Esophagus muscularis mucosa (tissue), 4 donors: ENCODE measurements at regions of chrX and their contacts with region 1.

Region 1: DNA sequence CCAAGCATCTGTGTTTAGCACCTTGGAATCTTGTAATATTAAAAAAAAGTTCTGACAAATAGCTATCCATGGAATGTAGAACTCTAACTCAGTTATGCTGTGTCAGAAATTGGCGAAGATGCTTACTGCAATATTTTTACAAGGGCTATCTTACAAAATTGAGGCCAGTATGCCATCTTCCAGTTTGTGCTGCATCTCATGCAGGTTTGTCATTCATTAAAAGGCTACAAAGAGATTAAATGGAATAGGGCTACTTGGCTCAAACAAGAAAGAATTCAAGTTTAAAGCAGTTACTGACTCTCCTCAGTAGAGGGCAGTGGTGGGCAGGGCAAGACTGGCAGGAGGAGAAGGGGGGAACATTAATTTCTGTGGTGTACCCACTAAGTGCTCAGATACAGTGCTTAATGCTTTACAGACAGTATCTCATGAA is 66.5 kb downstream of the SHROOM4 start:
- DNase-seq: no peak
- H3K4me3 ChIP-seq: no peak overlapping the region
- H3K27ac ChIP-seq: no peak overlapping the region
- H3K4me1 ChIP-seq: peaks cover 0 to 8% (median 0%) of the 10 kb centered on the region in 4 donors
- H3K27me3 ChIP-seq: peaks cover 0 to 7% (median 0%) of the 10 kb centered on the region in 4 donors
- CTCF ChIP-seq: peak; percentile 52 to 61 (median 53)
- EP300 ChIP-seq: no peak
- POLR2A ChIP-seq: no peak

Region 2: GRCh38 chrX:50697691-50698090 is 49.8 kb before region 1 on chrX:
- intact Hi-C with region 1: no loop called
- DNase-seq: no peak
- H3K4me3 ChIP-seq: no peak overlapping the region
- H3K27ac ChIP-seq: peak overlapping the region in 3 of 4 donors; percentile 18 to 52 (median 31)
- H3K4me1 ChIP-seq: peaks cover 0 to 13% (median 9%) of the 10 kb centered on the region in 4 donors
- H3K27me3 ChIP-seq: no peaks in the 10 kb centered on the region
- CTCF ChIP-seq: no peak
- EP300 ChIP-seq: no peak
- POLR2A ChIP-seq: no peak

Region 3: GRCh38 chrX:50707955-50708699 is 39.4 kb before region 1 on chrX:
- intact Hi-C with region 1: no loop called
- DNase-seq: no peak
- H3K4me3 ChIP-seq: no peak overlapping the region
- H3K27ac ChIP-seq: no peak overlapping the region
- H3K4me1 ChIP-seq: peaks cover 7 to 31% (median 20%) of the 10 kb centered on the region in 4 donors
- H3K27me3 ChIP-seq: no peaks in the 10 kb centered on the region
- CTCF ChIP-seq: no peak
- EP300 ChIP-seq: no peak
- POLR2A ChIP-seq: no peak

Region 4: GRCh38 chrX:50813827-50814742 is 66.6 kb after region 1 on chrX and contains the start of gene SHROOM4:
- intact Hi-C with region 1: loop called (anchors 10 kb)
- DNase-seq: no peak
- H3K4me3 ChIP-seq: peak within 1 kb of the TSS; percentile 57 to 68 (median 58)
- H3K27ac ChIP-seq: peak within 1 kb of the TSS; percentile 63 to 76 (median 65)
- H3K4me1 ChIP-seq: peaks cover 0 to 6% (median 3%) of the 10 kb centered on the region in 4 donors
- H3K27me3 ChIP-seq: no peaks in the 10 kb centered on the region
- CTCF ChIP-seq: no peak
- EP300 ChIP-seq: no peak
- POLR2A ChIP-seq: no peak
- total RNA-seq, gene SHROOM4: 5.4 to 12.4 (median 11.4) TPM

Region 5: DNA sequence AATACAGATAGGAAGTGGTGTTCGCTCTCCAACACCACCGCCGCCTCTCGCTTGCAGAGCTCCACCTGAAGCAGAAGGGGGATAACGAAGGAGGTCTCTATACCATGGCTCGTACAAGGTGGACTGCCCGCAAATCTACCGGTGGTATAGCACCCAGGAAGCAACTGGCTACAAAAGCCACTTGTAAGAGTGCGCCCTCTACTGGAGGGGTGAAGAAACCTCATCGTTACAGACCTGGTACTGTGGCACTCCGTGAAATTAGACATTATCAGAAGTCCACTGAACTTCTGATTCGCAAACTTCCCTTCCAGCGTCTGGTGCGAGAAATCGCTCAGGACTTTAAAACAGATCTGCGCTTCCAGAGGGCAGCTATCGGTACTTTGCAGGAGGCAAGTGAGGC is 157.8 kb after region 1 on chrX:
- intact Hi-C with region 1: loop called (anchors 2 kb)
- DNase-seq: no peak
- H3K4me3 ChIP-seq: no peak overlapping the region
- H3K27ac ChIP-seq: no peak overlapping the region
- H3K4me1 ChIP-seq: no peaks in the 10 kb centered on the region
- H3K27me3 ChIP-seq: peaks cover 0 to 11% (median 0%) of the 10 kb centered on the region in 4 donors
- CTCF ChIP-seq: no peak
- EP300 ChIP-seq: no peak
- POLR2A ChIP-seq: no peak

Region 6: DNA sequence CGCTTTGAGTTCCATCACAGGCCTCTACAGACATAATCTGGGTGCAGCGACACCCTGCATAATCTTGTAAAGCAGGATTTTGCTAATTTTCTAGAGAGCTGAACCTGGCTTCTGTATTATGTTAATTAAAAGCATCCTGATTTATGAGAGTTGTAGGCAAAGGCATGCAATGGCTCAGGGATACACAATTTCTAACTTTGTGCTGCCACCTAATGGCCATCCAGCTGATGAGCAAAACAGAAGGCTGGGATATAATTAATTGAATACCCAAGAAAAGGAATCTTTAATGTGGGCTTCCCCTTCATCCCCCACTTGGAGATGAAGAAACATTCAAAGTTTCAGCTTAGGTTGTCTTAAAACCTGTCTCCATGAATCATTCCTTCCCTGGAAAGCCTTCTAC is 241.2 kb after region 1 on chrX:
- intact Hi-C with region 1: no loop called
- DNase-seq: no peak
- H3K4me3 ChIP-seq: no peak overlapping the region
- H3K27ac ChIP-seq: no peak overlapping the region
- H3K4me1 ChIP-seq: no peaks in the 10 kb centered on the region
- H3K27me3 ChIP-seq: peaks cover 0 to 5% (median 0%) of the 10 kb centered on the region in 4 donors
- CTCF ChIP-seq: peak; percentile 42 to 47 (median 44)
- EP300 ChIP-seq: no peak
- POLR2A ChIP-seq: no peak